AG04449 (cell line): ENCODE measurements at regions of chr2 and their contacts with region 1.

Region 1: GRCh38 chr2:164737612-164738081 is 104.0 kb downstream of the COBLL1 start:
- DNase-seq: no peak
- H3K4me3 ChIP-seq: no peak overlapping the region
- CTCF ChIP-seq: peak; percentile 43

Region 2: DNA sequence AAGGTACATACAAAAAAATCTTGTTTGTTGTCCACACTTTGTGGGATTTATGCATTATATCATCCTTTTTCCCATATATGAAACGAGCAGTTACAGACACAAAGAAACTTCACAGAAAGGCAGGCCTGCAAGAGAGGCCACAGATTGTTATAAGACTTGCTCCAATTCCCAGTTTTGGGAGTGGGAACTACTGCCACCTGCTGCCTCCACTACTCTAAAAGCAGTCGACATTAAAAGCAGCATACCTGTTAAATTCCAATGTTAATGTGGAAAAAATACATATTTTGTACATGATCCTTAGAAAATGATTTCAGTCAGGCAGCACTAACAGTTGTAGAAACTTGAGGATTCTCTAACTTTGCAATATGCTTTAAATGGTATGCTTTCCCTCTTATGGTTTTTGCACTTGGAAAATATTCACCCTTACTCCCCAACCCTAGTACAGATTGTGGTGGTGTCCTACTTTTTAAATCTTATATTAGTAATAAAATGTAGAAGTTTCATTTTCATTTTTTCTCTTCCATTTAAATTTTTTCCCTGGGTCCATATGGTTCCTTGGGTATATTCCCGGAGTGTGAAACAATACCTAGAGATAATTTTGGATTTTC is 179.8 kb after region 1 on chr2:
- CTCF ChIA-PET with region 1: interaction called, 42 read pairs
- POLR2A ChIA-PET with region 1: no interaction called
- DNase-seq: no peak
- H3K4me3 ChIP-seq: no peak overlapping the region
- CTCF ChIP-seq: peak; percentile 14